Activated CD4-positive, alpha-beta T cell treated with anti-CD3 and anti-CD28 coated beads, Interleukin-2, amount 10 ng/mL, durations not matched to agents 7 days and 5 days (primary cell): ENCODE measurements at regions of chr17 and their contacts with region 1.

Region 1: GRCh38 chr17:16363749-16364536 is 10.7 kb upstream of the CENPV start:
- DNase-seq: peak; percentile 80
- H3K4me3 Mint-ChIP-seq: no peak overlapping the region
- H3K27ac Mint-ChIP-seq: no peak overlapping the region
- H3K4me1 Mint-ChIP-seq: peaks cover 4% of the 10 kb centered on the region
- H3K27me3 Mint-ChIP-seq: no peaks in the 10 kb centered on the region

Region 2: DNA sequence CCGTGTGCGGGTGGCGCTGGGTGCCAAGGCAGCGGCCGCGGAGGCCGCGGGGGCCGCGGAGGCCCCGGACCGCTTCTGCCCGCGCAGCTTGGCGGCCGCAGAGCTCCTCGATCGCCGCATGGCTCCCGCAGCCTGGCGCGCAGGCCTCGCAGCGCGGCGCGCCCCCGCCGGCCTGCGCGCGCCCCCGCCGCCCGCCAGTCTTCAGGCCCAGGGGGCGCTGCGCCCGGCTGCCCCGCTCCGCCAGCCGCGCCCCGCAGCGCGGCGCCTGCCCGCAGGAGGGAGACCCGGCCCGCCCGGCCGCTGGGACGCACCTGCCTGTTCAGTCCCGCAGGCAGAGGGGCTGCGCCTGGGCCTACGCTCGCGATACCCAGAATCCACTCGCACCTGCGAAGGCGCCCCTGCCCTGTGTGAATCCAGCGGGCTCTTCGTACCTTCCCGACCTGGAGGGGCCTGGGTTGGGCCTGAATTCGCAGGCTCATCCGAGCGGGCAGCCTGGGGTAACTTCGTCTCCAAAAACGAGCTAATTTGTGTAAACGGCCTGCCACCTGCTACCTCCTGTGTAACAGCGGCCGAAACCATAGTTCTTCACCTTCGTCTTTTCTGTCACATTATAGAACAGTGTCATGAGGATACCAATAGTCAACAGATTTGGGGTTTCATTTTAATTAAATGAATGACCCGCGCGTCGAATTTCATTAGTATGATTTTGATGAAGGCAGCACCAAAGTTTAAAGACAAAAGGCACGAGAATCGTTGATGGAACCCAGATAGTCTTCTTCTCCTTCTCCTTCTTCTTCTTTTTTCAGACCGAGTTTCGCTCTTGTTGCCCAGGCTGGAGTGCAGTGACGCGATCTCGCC is 10.4 kb before region 1 on chr17 and contains the start of gene CENPV:
- CTCF ChIA-PET with region 1: interaction called, 27 read pairs
- POLR2A ChIA-PET with region 1: no interaction called
- DNase-seq: peak; percentile 59
- H3K4me3 Mint-ChIP-seq: peak within 1 kb of the TSS; percentile 89
- H3K27ac Mint-ChIP-seq: peak within 1 kb of the TSS; percentile 87
- H3K4me1 Mint-ChIP-seq: peaks cover 23% of the 10 kb centered on the region
- H3K27me3 Mint-ChIP-seq: peaks cover 5% of the 10 kb centered on the region
- total RNA-seq, gene CENPV: 16.6 to 21.1 TPM

Region 3: DNA sequence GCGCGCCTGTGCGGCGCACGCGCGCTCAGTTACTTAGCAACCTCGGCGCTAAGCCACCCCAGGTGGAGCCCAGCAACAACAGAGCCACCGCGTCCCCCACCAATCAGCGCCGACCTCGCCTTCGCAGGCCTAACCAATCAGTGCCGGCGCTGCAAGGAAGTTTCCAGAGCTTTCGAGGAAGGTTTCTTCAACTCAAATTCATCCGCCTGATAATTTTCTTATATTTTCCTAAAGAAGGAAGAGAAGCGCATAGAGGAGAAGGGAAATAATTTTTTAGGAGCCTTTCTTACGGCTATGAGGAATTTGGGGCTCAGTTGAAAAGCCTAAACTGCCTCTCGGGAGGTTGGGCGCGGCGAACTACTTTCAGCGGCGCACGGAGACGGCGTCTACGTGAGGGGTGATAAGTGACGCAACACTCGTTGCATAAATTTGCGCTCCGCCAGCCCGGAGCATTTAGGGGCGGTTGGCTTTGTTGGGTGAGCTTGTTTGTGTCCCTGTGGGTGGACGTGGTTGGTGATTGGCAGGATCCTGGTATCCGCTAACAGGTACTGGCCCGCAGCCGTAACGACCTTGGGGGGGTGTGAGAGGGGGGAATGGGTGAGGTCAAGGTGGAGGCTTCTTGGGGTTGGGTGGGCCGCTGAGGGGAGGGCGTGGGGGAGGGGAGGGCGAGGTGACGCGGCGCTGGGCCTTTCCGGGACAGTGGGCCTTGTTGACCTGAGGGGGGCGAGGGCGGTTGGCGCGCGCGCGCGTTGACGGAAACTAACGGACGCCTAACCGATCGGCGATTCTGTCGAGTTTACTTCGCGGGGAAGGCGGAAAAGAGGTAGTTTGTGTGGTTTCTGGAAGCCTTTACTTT is 16.9 kb after region 1 on chr17 and contains the start of gene UBB:
- CTCF ChIA-PET with region 1: interaction called, 19 read pairs
- POLR2A ChIA-PET with region 1: no interaction called
- DNase-seq: peak; percentile 96
- H3K4me3 Mint-ChIP-seq: peak within 1 kb of the TSS; percentile 92
- H3K27ac Mint-ChIP-seq: peak within 1 kb of the TSS; percentile 96
- H3K4me1 Mint-ChIP-seq: peaks cover 27% of the 10 kb centered on the region
- H3K27me3 Mint-ChIP-seq: no peaks in the 10 kb centered on the region
- total RNA-seq, gene UBB: 1,415 to 1,539 TPM